Posterior vena cava (tissue), 2 donors: ENCODE measurements at regions of chr19 and their contacts with region 1.

Region 1: GRCh38 chr19:42244347-42245220 is 2.2 kb upstream of the GSK3A start:
- DNase-seq: peak; percentile 98

Region 2: DNA sequence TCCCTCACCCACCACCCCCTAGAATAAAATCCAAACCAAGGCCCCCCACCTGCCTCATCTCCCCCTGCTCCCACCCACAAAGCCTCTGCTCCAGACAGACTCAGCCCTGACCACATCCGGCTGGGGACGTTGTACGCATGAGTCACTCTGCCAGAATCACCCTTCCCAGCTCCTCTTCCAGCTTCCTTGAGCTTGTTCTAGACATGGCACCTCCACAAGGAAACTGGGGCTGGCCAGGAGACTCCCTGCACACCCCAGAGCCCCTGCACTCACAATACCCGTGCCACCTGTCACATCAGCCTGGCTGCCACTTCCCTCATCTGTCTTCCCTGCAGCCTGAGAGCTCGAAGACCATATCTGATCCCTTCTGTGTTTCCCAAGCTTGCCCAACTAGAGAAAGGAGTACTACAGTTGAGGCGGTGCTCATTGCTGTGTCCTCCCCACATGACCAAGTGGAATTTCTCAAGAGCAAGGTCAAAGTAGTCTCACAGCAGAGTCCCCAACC is 36.8 kb before region 1 on chr19:
- intact Hi-C with region 1: no loop called
- DNase-seq: no peak

Region 3: GRCh38 chr19:42255766-42256745 is 11.5 kb after region 1 on chr19:
- intact Hi-C with region 1: loop called in 1 of 2 experiments (anchors 1 kb)
- DNase-seq: no peak

Region 4: GRCh38 chr19:42280192-42281145 is 35.9 kb after region 1 on chr19:
- intact Hi-C with region 1: loop called in 1 of 2 experiments (anchors 2 kb)
- DNase-seq: peak; percentile 98

Region 5: DNA sequence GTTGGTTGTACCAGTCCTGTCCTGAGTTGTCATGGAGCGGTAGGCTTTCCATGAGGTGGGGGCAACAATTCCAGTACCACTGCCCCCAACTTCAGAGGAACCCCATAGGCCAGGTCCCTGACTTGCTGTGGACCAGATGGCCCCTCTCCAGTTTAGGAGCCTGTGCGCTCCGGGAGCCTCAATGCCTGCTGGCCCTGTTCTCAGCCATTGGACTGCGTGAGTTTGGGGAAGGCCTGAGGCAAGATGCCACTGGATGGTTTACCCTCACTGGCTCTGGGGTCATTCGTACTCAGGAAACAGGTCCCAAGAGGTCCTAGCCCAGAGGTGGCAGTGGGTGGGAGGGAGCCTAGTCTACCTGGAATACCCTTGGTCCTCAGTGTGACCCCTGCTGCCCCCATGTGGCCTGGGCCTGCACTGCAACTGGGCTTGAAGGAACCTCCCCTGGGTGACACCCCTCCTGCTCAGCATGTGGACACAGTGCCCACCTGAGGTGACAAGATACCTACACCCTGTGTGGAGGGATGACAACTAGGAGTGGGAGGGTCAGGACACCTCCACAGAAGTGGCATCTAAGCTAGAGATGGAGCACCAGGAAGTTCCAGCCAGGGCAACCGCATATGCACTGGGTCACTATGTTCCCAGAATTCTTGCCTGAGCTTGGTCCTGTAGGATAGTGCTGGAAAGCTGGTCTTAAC is 51.4 kb after region 1 on chr19:
- intact Hi-C with region 1: loop called in 1 of 2 experiments (anchors 10 kb)
- DNase-seq: peak; percentile 94